HepG2 (cell line): ENCODE measurements at regions of chr2 and their contacts with region 1.

Region 1: DNA sequence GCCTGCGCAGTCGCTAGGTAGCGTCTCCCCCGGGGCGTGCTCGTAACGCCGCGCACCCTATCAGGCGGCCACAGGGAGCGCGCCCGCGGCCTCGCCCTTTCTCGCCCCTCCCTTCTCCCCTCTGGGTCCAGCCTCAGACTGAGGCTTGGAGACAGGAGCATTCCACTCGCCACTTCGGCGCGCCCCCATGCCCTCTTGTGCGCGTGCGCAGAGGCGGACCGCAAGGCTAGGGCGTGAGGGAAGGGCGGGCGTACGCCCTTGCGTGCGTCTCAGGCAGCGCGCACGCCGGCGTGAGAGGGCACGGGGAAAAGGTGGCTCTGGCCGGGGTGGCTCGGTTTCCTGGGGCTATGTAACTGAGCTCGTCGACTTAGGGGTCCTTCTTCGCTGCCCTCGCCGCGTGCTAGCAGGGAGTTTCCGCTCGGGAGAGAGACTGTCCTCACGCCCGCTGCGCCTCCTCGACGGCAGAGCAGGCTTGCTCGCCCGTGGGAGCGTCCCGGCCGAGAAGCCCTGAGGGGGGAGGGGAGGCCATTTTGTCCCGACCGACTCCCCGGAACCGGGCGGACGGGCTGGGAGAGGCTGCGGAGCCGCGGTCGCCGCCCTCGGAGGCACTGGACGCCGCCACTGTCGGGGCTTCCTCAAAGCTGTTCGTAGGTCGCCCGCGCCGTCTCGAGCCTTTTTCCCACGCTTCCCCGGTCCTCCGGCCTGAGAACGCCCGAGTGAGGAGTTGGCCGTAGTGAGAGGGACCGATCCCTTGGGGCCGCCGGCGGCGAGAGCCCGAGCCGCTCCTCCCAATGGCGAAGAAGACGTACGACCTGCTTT is at the start of gene RAB10:
- DNase-seq: peak; percentile 99
- ATAC-seq: peak; percentile 89
- H3K4me3 ChIP-seq: peak within 1 kb of the TSS; percentile 82 to 94 (median 91)
- H3K27ac ChIP-seq: peak within 1 kb of the TSS; percentile 85
- H3K4me1 ChIP-seq: peaks cover 37% of the 10 kb centered on the region
- H3K27me3 ChIP-seq: peaks cover 0 to 5% of the 10 kb centered on the region in 2 experiments; a peak in 2 of 5 replicates
- CTCF ChIP-seq: peak; percentile 22; the same call in 1 of the 2 replicates
- EP300 ChIP-seq: peak; percentile 6 to 48; a peak in 1 of 4 replicates
- POLR2A ChIP-seq: peak; percentile 96 to 98
- RAD21 ChIP-seq: peak; percentile 68; the same call in 1 of the 2 replicates
- total RNA-seq, gene RAB10: 106 and 120 TPM in 2 replicates

Region 2: GRCh38 chr2:25808006-25808383 is 226.0 kb before region 1 on chr2:
- CTCF ChIA-PET with region 1: no interaction called
- POLR2A ChIA-PET with region 1: no interaction called
- in situ Hi-C with region 1: no loop called
- intact Hi-C with region 1: no loop called
- DNase-seq: no peak
- ATAC-seq: no peak; the same call in 2 of the 3 replicates
- H3K4me3 ChIP-seq: no peak overlapping the region
- H3K27ac ChIP-seq: peak overlapping the region; percentile 79
- H3K4me1 ChIP-seq: peaks cover 45% of the 10 kb centered on the region
- H3K27me3 ChIP-seq: no peaks in the 10 kb centered on the region
- CTCF ChIP-seq: no peak
- EP300 ChIP-seq: no peak
- POLR2A ChIP-seq: no peak
- RAD21 ChIP-seq: no peak

Region 3: GRCh38 chr2:26000561-26001082 is 33.4 kb before region 1 on chr2:
- CTCF ChIA-PET with region 1: no interaction called
- POLR2A ChIA-PET with region 1: interaction called, 6 read pairs
- in situ Hi-C with region 1: no loop called
- intact Hi-C with region 1: loop called (anchors 2 kb)
- DNase-seq: peak; percentile 79
- ATAC-seq: peak; percentile 65
- H3K4me3 ChIP-seq: no peak overlapping the region
- H3K27ac ChIP-seq: no peak overlapping the region
- H3K4me1 ChIP-seq: peaks cover 60% of the 10 kb centered on the region
- H3K27me3 ChIP-seq: peaks cover 0 to 8% of the 10 kb centered on the region in 2 experiments; a peak in 3 of 5 replicates
- CTCF ChIP-seq: no peak
- EP300 ChIP-seq: no peak
- POLR2A ChIP-seq: peak in 1 of 2 experiments; percentile 33; a peak in 1 of 4 replicates
- RAD21 ChIP-seq: no peak; the same call in 1 of the 2 replicates

Region 4: GRCh38 chr2:26011990-26012856 is 21.8 kb before region 1 on chr2:
- CTCF ChIA-PET with region 1: no interaction called
- POLR2A ChIA-PET with region 1: interaction called, 23 read pairs
- in situ Hi-C with region 1: no loop called
- intact Hi-C with region 1: loop called (anchors 2 kb)
- DNase-seq: peak; percentile 94
- ATAC-seq: peak; percentile 88
- H3K4me3 ChIP-seq: peak overlapping the region in 2 of 3 experiments; percentile 5 to 41; a peak in 2 of 6 replicates
- H3K27ac ChIP-seq: peak overlapping the region; percentile 0
- H3K4me1 ChIP-seq: peaks cover 38% of the 10 kb centered on the region
- H3K27me3 ChIP-seq: peaks cover 2 to 11% of the 10 kb centered on the region in 2 experiments; a peak in 1 of 5 replicates
- CTCF ChIP-seq: no peak
- EP300 ChIP-seq: peak in 1 of 2 experiments; percentile 66; a peak in 3 of 4 replicates
- POLR2A ChIP-seq: no peak
- RAD21 ChIP-seq: no peak

Region 5: GRCh38 chr2:26018176-26018716 is 15.8 kb before region 1 on chr2:
- CTCF ChIA-PET with region 1: no interaction called
- POLR2A ChIA-PET with region 1: interaction called, 23 read pairs
- in situ Hi-C with region 1: no loop called
- intact Hi-C with region 1: loop called (anchors 2 kb)
- DNase-seq: peak; percentile 48
- ATAC-seq: peak; percentile 94
- H3K4me3 ChIP-seq: no peak overlapping the region
- H3K27ac ChIP-seq: no peak overlapping the region
- H3K4me1 ChIP-seq: peaks cover 35% of the 10 kb centered on the region
- H3K27me3 ChIP-seq: peaks cover 2 to 16% of the 10 kb centered on the region in 2 experiments; a peak in 2 of 5 replicates
- CTCF ChIP-seq: no peak
- EP300 ChIP-seq: no peak
- POLR2A ChIP-seq: no peak
- RAD21 ChIP-seq: no peak

Region 6: DNA sequence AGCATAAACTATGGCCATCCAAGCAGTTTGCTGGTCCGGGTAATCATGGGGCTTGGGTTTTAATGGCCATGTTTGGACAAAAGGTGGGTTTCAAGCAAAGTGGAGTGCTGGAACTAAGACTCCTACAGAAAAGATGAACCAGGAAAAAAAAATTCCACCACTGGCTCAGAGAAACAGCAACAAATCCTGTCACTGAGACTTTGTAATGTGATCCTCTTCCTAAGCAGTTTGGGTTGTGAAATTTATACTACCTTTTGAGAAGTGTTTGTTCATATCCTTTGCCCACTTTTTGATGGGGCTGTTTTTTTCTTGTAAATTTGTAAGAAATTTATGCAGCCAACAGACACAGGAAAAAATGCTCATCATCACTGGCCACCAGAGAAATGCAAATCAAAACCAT is 1777.7 kb after region 1 on chr2:
- CTCF ChIA-PET with region 1: no interaction called
- POLR2A ChIA-PET with region 1: no interaction called
- in situ Hi-C with region 1: no loop called
- intact Hi-C with region 1: no loop called
- DNase-seq: no peak
- ATAC-seq: no peak
- H3K4me3 ChIP-seq: no peak overlapping the region
- H3K27ac ChIP-seq: no peak overlapping the region
- H3K4me1 ChIP-seq: peaks cover 15% of the 10 kb centered on the region
- H3K27me3 ChIP-seq: no peaks in the 10 kb centered on the region
- CTCF ChIP-seq: no peak
- EP300 ChIP-seq: no peak
- POLR2A ChIP-seq: no peak
- RAD21 ChIP-seq: no peak